CD4-positive, alpha-beta T cell (primary cell): ENCODE measurements at regions of chr6 and their contacts with region 1.

Region 1: DNA sequence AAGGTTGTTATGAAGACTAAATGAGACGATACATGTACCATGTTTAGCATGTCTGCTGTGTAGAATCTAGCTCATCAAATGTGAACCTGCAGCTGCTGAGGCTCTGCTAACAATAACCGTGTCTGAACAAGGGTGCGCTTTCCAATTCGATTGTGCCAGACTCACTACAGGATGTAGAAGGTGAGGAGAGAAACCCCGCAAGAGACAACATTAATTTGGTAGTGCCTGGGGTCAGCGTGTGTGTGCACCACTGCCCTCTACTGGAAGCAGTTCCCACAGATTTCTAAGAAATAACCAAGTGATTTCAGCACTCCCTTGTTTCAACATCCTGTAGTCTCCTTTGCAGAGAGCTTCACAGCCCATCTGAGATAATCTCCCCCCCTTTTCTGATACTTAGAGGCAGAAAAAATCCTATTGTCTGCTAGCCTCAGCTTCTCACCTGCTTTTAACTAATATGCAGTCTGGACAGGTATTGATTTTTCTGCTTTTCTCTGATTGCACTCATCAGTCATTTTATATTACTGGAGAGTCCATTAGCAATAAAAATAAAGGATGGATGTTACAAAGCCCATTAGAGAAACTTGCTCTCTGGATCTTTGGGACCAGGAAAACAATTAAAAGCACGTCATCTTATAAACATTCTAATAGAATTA is 96.7 kb upstream of the BACH2 start:
- DNase-seq: peak; percentile 54 to 86 (median 61)
- ATAC-seq: peak; percentile 73
- H3K4me3 ChIP-seq: no peak overlapping the region
- H3K4me3 Mint-ChIP-seq: no peak overlapping the region
- H3K27ac ChIP-seq: no peak overlapping the region
- H3K27ac Mint-ChIP-seq: peak overlapping the region; percentile 6
- H3K4me1 ChIP-seq: peaks cover 22% of the 10 kb centered on the region
- H3K4me1 Mint-ChIP-seq: peaks cover 34% of the 10 kb centered on the region
- H3K27me3 ChIP-seq: no peaks in the 10 kb centered on the region
- H3K27me3 Mint-ChIP-seq: no peaks in the 10 kb centered on the region
- CTCF ChIP-seq: peak; percentile 81

Region 2: DNA sequence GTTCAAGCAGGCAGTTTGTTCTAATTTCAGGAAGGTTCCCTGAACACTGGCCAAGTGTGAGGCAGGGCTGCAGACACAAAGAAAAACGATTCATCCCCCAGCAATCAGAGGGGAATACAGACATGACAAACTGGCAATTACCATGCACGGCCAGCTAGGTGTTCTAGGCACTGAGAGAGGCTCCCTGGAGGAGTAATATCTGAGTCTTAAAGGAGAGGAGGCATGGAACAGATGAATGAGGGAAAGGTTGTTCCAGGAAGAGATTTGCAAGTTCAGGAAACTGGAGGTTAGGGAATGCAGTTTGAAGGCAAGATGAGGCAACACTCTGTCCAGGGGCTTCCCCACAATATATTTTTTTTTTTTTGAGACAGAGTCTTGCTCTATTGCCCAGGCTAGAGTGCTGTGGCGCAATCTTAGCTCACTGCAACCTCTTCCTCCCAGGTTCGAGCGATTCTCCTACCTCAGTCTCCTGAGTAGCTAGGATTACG is 992.4 kb before region 1 on chr6:
- CTCF ChIA-PET with region 1: no interaction called
- POLR2A ChIA-PET with region 1: no interaction called
- intact Hi-C with region 1: no loop called
- DNase-seq: no peak
- ATAC-seq: no peak
- H3K4me3 ChIP-seq: no peak overlapping the region
- H3K4me3 Mint-ChIP-seq: no peak overlapping the region
- H3K27ac ChIP-seq: no peak overlapping the region
- H3K27ac Mint-ChIP-seq: no peak overlapping the region
- H3K4me1 ChIP-seq: no peaks in the 10 kb centered on the region
- H3K4me1 Mint-ChIP-seq: no peaks in the 10 kb centered on the region
- H3K27me3 ChIP-seq: no peaks in the 10 kb centered on the region
- H3K27me3 Mint-ChIP-seq: no peaks in the 10 kb centered on the region
- CTCF ChIP-seq: no peak

Region 3: DNA sequence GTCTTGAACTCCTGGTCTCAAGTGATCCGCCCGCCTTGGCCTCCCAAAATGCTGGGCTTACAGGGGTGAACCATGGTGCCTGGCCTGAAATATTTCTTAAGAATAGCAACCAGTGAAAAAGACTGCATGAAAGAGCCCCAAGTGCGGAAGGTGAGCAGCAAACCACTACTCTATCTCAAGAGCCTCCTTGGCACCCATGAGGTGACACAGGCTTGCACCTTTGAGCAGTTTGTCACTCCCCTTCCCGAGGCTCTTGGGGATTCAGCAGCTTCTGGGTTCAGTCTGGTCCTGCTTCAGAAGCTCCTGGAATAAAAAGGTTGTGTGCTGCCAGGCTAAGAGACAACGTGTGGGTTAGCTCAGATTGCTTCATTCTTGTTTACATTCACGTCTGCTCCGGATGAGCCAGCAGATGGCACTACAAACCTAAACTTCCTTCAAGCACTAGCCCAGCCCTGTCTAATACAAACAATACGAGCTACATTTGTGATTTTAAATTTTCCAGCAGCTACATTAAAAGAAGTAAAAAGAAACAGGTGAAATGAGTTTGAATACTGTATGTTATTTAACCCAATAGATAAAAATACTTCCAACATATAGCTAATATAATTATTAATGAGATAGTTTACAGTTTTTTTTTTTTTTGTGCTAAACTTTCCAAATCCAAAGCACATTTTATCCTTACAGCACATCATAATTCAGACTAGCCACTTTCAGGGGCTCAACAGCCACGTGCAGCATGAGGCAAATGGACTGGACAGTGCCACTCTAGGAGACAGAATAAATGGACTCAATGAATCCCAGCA is 452.9 kb before region 1 on chr6:
- CTCF ChIA-PET with region 1: interaction called, 15 read pairs
- POLR2A ChIA-PET with region 1: no interaction called
- intact Hi-C with region 1: loop called (anchors 1 to 2 kb)
- DNase-seq: peak; percentile 47 to 87 (median 65)
- ATAC-seq: peak; percentile 95
- H3K4me3 ChIP-seq: no peak overlapping the region
- H3K4me3 Mint-ChIP-seq: no peak overlapping the region
- H3K27ac ChIP-seq: no peak overlapping the region
- H3K27ac Mint-ChIP-seq: peak overlapping the region; percentile 67
- H3K4me1 ChIP-seq: peaks cover 8% of the 10 kb centered on the region
- H3K4me1 Mint-ChIP-seq: peaks cover 41% of the 10 kb centered on the region
- H3K27me3 ChIP-seq: no peaks in the 10 kb centered on the region
- H3K27me3 Mint-ChIP-seq: no peaks in the 10 kb centered on the region
- CTCF ChIP-seq: peak; percentile 89

Region 4: DNA sequence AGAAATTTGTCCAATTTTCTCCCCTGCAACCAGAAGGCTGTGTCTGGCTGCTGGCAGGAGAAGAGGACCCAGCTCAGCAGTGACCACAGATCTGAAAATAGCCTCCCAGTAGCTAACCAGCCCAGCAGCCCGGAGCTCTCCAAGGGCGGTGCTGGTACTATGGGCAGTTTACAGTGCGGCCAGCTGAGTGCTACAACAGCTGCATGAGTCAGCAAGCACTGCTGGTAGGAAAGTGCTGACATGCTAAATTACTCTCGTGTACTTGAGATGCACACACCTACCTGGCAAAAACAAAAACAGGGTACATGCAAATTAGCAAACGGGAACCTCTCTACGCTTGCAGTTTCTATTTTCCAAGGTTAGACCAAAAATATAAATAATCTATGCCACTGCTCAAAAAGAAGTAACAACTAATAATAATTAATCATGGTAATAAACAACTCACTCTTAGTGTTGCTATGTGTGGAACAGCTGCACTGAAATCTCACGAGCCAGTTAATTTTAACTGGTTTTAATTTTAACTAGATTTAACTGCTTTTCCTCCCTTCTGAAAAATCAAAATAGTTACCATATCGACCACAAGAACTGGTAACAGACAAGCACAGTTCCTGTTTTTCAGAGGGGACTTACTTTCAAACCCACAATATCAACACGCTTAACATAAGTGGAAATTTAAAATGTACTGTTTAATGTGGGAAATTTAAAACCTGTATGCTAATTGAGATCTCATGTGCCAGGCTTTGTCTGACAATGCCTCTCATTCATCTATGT is 107.6 kb before region 1 on chr6:
- CTCF ChIA-PET with region 1: interaction called, 11 read pairs
- POLR2A ChIA-PET with region 1: interaction called, 5 read pairs
- intact Hi-C with region 1: no loop called
- DNase-seq: peak in 11 of 14 experiments; percentile 21 to 79 (median 45)
- ATAC-seq: peak; percentile 47
- H3K4me3 ChIP-seq: peak overlapping the region; percentile 54
- H3K4me3 Mint-ChIP-seq: peak overlapping the region; percentile 83
- H3K27ac ChIP-seq: peak overlapping the region; percentile 12 to 80
- H3K27ac Mint-ChIP-seq: peak overlapping the region; percentile 91
- H3K4me1 ChIP-seq: peaks cover 38% of the 10 kb centered on the region
- H3K4me1 Mint-ChIP-seq: peaks cover 93% of the 10 kb centered on the region
- H3K27me3 ChIP-seq: no peaks in the 10 kb centered on the region
- H3K27me3 Mint-ChIP-seq: no peaks in the 10 kb centered on the region
- CTCF ChIP-seq: no peak

Region 5: DNA sequence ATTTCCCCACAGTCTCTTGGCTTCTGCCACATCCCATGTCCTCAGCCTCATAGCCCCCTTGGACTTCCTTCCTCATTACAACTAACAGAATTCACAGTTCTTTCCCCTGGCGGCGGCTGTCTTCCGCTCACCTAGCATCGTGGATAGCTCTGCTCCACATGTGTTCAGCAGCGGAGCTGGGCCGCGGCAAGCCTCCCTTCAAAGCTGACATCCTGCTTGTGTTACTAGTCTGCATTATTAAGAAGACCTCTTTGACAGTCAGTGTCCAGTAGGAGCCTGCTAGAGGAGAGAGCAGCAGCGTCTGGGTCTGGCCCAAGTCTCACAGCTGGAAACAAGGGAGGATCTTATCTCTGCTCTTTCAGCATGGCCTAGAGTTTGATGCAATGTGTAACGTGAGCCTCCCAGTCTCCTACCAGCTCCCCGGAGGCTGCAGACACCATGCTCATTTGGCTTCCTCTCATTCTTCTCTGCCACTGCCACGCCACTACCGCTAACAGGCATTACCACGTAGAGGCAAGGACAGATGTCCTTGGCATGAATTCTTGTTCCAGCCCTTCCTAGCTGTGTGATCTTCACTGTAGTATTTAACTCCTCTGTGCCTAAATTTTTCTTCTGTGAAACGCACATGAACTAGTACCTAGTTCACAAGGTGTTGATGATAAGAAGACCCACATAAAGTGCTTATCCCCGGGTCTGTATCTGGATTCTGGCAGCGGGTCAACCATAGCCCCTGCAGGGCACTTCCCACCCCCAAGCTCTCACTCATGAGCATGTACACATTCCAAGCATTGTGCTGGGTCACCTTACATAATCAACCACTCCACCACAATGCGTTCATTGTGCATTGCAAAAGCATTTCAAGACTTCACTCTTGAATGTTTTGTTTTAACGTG is 10.4 kb after region 1 on chr6:
- CTCF ChIA-PET with region 1: interaction called, 9 read pairs
- POLR2A ChIA-PET with region 1: interaction called, 15 read pairs
- intact Hi-C with region 1: no loop called
- DNase-seq: no peak
- ATAC-seq: no peak
- H3K4me3 ChIP-seq: no peak overlapping the region
- H3K4me3 Mint-ChIP-seq: no peak overlapping the region
- H3K27ac ChIP-seq: no peak overlapping the region
- H3K27ac Mint-ChIP-seq: peak overlapping the region; percentile 86
- H3K4me1 ChIP-seq: peaks cover 49% of the 10 kb centered on the region
- H3K4me1 Mint-ChIP-seq: peaks cover 42% of the 10 kb centered on the region
- H3K27me3 ChIP-seq: no peaks in the 10 kb centered on the region
- H3K27me3 Mint-ChIP-seq: no peaks in the 10 kb centered on the region
- CTCF ChIP-seq: no peak

Region 6: GRCh38 chr6:90456001-90456400 is 62.6 kb after region 1 on chr6:
- CTCF ChIA-PET with region 1: interaction called, 13 read pairs
- POLR2A ChIA-PET with region 1: no interaction called
- intact Hi-C with region 1: no loop called
- DNase-seq: no peak
- ATAC-seq: no peak
- H3K4me3 ChIP-seq: no peak overlapping the region
- H3K4me3 Mint-ChIP-seq: no peak overlapping the region
- H3K27ac ChIP-seq: no peak overlapping the region
- H3K27ac Mint-ChIP-seq: no peak overlapping the region
- H3K4me1 ChIP-seq: peaks cover 25% of the 10 kb centered on the region
- H3K4me1 Mint-ChIP-seq: peaks cover 30% of the 10 kb centered on the region
- H3K27me3 ChIP-seq: no peaks in the 10 kb centered on the region
- H3K27me3 Mint-ChIP-seq: no peaks in the 10 kb centered on the region
- CTCF ChIP-seq: no peak